GM10248 (cell line): ENCODE measurements at regions of chr1 and their contacts with region 1.

Region 1: DNA sequence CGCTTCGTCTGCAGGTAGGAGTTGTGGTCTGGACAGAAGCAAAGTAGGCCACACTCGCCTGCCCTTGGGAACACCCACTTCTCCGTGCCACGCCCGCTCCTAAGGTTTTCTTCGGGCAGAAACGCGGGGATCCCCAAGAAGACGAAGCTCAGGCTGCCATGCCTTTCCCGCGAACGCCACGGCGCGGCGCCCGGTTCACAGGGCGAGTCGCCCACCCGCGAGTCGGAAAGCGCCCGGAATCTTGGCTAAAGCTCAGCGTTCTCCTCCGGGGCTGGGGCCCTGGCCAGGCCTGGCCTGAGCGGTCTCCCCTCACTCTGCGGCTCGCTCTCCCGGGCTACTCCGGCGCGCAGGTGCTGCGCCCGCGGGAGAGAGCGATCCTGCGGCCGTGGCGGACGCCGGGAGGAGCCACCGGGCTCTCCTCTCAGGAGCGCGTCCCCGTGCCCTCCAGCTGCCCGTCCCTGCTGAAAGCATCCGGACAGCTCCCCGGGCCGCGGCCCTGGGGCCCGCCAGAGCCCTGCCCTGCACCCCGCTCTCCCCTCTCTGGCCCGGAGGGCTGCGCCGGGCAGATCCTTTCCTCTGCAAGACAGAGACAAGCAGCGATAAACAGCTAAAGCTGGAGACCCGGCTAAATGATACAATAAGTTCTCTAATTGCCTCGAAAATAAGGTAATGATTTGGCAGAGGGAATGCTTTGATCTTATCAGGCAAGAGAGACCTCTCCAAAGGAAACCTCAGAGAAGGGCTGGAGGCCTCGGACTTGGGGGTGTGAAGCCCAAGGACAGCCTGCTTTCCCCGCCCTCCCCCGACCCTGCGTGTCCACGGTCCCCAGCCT is 6.7 kb upstream of the WNT2B start:
- DNase-seq: peak; percentile 67
- CTCF ChIP-seq: peak; percentile 89

Region 2: DNA sequence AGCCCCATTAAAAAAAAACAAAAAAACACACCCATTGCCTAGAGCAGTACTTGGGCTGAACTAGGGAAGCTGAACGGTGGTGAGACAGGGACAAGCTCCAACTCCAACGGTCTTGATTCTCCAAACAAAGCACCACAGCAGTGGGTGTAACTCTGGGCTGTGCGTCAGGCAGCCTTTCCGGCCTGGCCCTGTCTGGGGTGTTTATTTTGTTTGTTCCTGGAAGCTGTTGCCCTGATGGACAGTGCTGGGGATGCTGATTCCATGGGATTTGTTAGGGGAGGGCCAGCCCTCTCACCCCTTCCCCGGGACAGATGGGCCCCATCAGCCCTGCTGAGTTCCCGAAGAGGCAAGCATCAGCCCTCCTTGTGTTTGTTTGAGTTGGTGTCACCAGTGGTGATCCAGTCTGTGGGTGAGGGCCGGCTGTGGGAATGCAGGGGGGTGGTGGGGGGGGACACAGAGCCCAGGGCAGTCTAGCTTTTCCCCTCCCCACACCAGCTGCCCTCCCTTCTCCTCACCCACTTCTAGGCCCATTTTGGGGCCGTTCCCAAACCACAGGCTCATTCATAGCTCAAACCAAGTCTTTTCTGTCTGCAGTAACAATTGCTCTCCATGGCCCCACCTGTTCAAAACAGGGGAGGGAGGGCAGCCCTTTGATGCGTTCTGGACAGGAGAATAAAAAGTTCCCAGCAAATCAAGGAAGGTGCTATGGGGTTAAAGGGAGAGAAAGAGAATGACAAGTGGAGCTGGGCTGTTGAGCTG is 11.3 kb after region 1 on chr1:
- CTCF ChIA-PET with region 1: interaction called, 11 read pairs
- POLR2A ChIA-PET with region 1: no interaction called
- DNase-seq: no peak
- CTCF ChIP-seq: no peak

Region 3: GRCh38 chr1:112522621-112523020 is 20.6 kb after region 1 on chr1:
- CTCF ChIA-PET with region 1: interaction called, 10 read pairs
- POLR2A ChIA-PET with region 1: no interaction called
- DNase-seq: no peak
- CTCF ChIP-seq: no peak

Region 4: DNA sequence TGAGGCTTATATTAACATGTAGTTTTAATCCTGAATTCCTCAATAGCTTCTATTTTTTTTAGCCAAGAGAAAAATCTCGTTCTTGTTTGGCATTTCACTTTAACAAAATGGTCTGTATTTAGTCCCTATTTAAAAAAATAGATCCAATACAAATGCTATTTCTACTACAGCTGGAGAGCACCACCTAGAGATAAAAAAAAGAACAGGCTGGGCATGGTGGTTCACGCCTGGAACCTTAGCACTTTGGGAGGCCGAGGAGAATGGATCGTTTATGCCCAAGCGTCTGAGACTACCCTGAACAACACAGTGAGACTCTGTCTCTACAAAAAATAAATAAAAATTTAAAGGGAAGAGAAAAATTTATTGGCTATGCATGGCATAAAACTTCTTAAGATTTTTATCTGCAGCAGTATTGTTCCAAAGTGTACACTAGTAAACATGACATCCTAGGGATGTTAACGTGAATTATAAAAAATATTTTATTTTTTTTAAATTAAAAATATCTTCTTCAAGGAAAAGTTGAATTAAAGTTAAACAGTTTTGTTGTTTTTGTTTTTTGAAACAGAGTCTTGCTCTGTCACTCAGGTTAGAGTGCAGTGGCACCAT is 112.5 kb after region 1 on chr1:
- CTCF ChIA-PET with region 1: interaction called, 15 read pairs
- POLR2A ChIA-PET with region 1: no interaction called
- DNase-seq: no peak
- CTCF ChIP-seq: peak; percentile 61

Region 5: GRCh38 chr1:112674439-112674985 is 172.5 kb after region 1 on chr1 and contains the start of gene MOV10:
- CTCF ChIA-PET with region 1: interaction called, 11 read pairs
- POLR2A ChIA-PET with region 1: no interaction called
- DNase-seq: peak; percentile 74
- CTCF ChIP-seq: no peak

Region 6: GRCh38 chr1:112706908-112707663 is 205.1 kb after region 1 on chr1 and contains the start of gene RHOC:
- CTCF ChIA-PET with region 1: interaction called, 36 read pairs
- POLR2A ChIA-PET with region 1: no interaction called
- DNase-seq: peak; percentile 90
- CTCF ChIP-seq: peak; percentile 96